ENCODE measurements at regions of chr11 and their contacts with region 1.

Region 1: DNA sequence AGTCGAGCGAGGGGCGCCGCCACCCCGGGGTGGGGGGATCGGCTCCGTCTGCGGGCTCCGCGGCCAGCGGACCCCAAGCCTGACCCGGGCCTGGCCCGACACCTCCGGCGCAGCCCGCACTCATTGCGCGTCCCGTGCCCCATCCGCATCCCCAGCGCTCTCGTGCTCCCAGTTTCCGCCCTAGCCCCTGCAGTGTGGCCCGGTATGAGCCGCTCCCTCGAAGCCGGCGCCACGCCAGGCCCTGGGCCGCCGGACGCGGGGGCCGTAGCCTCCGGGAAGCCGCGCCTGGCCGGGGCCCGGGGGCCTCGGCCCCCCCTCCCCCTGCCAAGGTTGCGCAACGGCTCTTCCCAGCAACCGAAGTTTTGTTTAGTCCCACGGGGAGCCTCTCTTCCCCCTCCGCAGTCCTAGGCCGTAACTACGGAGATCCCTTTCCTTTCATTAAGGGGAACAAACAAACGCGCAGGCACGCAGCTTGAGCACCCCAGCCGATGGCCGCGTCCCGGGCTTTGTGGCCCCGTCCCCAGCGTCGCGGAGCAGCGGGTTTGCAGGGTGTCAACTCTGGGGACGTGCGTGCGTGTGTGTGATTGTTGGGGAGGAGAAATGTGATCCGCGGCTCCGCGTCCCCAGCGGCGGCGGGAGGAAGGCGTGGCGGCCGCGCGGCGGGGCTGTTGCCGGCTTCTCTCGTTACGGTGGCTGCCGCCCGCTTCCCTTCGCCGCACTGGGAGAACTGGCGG is 883 bp downstream of the HIPK3 start:
- DNase-seq: peak; percentile 74 to 86
- ATAC-seq: peak; percentile 71 to 73
- H3K4me3 ChIP-seq: peak overlapping the region; percentile 70 to 96 (median 90)
- H3K27ac ChIP-seq: peak overlapping the region; percentile 97 to 100 (median 100)
- H3K4me1 ChIP-seq: peaks cover 33 to 36% of the 10 kb centered on the region in 2 donors
- H3K27me3 ChIP-seq: no peaks in the 10 kb centered on the region
- CTCF ChIP-seq: peak; percentile 33 to 60 (median 43)
- POLR2A ChIP-seq: peak; percentile 81 to 84

Region 2: DNA sequence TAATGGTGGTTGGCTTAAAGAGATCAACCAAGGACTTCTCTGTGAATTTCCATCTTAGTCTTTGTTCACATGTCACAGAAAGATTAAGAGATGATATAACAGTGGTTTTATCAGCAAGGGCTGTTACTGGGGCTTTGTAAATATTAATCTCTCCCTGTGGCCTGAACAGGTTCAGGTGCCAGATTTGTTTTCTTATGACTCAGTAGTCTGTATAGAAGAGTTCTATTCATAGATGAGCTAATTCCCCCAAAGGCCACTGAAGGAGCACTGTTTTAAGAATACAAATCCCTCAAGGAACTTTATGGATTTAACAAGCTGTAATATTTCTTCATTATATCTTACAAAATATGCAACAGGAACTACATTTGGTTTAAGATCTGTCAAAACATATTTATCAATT is 168.3 kb before region 1 on chr11:
- in situ Hi-C with region 1: no loop called
- intact Hi-C with region 1: no loop called
- DNase-seq: no peak
- ATAC-seq: no peak
- H3K4me3 ChIP-seq: no peak overlapping the region
- H3K27ac ChIP-seq: no peak overlapping the region
- H3K4me1 ChIP-seq: no peaks in the 10 kb centered on the region
- H3K27me3 ChIP-seq: no peaks in the 10 kb centered on the region
- CTCF ChIP-seq: no peak
- POLR2A ChIP-seq: no peak

Region 3: GRCh38 chr11:33161120-33162005 is 96.7 kb before region 1 on chr11 and contains the start of gene CSTF3:
- in situ Hi-C with region 1: loop called in 1 of 4 experiments (anchors 10 kb)
- intact Hi-C with region 1: loop called (anchors 1 kb)
- DNase-seq: peak; percentile 99 to 100
- ATAC-seq: peak; percentile 99
- H3K4me3 ChIP-seq: peak within 1 kb of the TSS; percentile 85 to 97 (median 92)
- H3K27ac ChIP-seq: peak within 1 kb of the TSS; percentile 88 to 95 (median 90)
- H3K4me1 ChIP-seq: peaks cover 24 to 40% of the 10 kb centered on the region in 2 donors
- H3K27me3 ChIP-seq: no peaks in the 10 kb centered on the region
- CTCF ChIP-seq: peak; percentile 52 to 82 (median 67)
- POLR2A ChIP-seq: peak; percentile 57 to 71
- total RNA-seq, gene CSTF3: 3.3 to 9.5 (median 6.1) TPM

Region 4: GRCh38 chr11:33291004-33291777 is 33.1 kb after region 1 on chr11:
- in situ Hi-C with region 1: no loop called
- intact Hi-C with region 1: loop called (anchors 2 kb)
- DNase-seq: peak; percentile 35 to 54
- ATAC-seq: peak; percentile 98 to 99
- H3K4me3 ChIP-seq: peak overlapping the region; percentile 9 to 24 (median 15)
- H3K27ac ChIP-seq: peak overlapping the region; percentile 76 to 84 (median 80)
- H3K4me1 ChIP-seq: peaks cover 48 to 81% of the 10 kb centered on the region in 2 donors
- H3K27me3 ChIP-seq: no peaks in the 10 kb centered on the region
- CTCF ChIP-seq: no peak
- POLR2A ChIP-seq: no peak

Region 5: GRCh38 chr11:33687733-33688479 is 429.8 kb after region 1 on chr11:
- in situ Hi-C with region 1: loop called in 1 of 4 experiments (anchors 25 kb)
- intact Hi-C with region 1: no loop called
- DNase-seq: no peak
- ATAC-seq: no peak
- H3K4me3 ChIP-seq: no peak overlapping the region
- H3K27ac ChIP-seq: peak overlapping the region in 1 of 4 donors; percentile 78
- H3K4me1 ChIP-seq: peaks cover 21 to 37% of the 10 kb centered on the region in 2 donors
- H3K27me3 ChIP-seq: no peaks in the 10 kb centered on the region
- CTCF ChIP-seq: peak; percentile 38 to 68 (median 60)
- POLR2A ChIP-seq: no peak

Region 6: DNA sequence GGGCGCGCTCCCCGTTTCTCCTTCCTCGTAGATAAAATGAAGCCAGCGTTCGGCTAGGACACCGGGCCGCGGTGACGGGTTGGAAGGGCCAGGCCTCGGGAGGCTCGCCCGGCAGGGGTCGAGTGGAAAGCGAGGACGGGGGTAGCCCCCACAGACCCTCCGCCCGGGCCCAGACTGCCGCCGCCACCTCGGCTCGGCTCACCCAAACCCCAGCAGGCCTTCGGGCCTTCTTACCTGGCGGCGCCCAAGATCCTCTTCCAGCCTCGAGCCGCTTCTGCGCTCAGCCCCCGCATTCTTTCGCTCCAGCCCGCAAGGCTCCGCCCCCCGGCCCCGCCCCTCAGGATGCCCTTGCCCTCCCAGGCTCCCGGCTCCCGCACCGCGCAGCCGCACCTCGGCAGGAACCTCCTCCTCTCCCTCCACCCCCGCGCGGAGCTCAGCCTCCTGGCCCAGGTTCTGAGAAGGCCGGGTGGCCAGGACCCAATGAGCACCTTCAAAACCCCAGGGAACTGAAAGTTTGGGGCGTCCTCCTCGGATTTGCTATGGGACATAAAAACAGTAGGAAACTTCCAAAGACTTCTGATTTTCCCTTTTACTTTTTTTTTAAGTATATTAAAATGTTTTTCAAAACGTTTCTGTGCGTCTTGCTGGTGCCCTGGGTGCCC is 478.2 kb after region 1 on chr11 and contains the start of gene CD59:
- in situ Hi-C with region 1: no loop called
- intact Hi-C with region 1: loop called (anchors 5 kb)
- DNase-seq: peak; percentile 97
- ATAC-seq: peak; percentile 78 to 84
- H3K4me3 ChIP-seq: peak within 1 kb of the TSS; percentile 78 to 96 (median 88)
- H3K27ac ChIP-seq: peak within 1 kb of the TSS; percentile 92 to 99 (median 98)
- H3K4me1 ChIP-seq: peaks cover 39 to 43% of the 10 kb centered on the region in 2 donors
- H3K27me3 ChIP-seq: no peaks in the 10 kb centered on the region
- CTCF ChIP-seq: peak in 1 of 5 experiments; percentile 18
- POLR2A ChIP-seq: peak; percentile 94 to 99
- total RNA-seq, gene CD59: 476 to 717 (median 695) TPM

Measured in gastrocnemius medialis (tissue), 4 donors.